ENCODE measurements at regions of chr1 and their contacts with region 1.

Region 1: GRCh38 chr1:3491291-3492246 is 37.1 kb downstream of the ARHGEF16 start:
- DNase-seq: peak; percentile 79
- H3K4me3 ChIP-seq: no peak overlapping the region
- H3K27ac ChIP-seq: no peak overlapping the region
- H3K4me1 ChIP-seq: no peaks in the 10 kb centered on the region
- H3K27me3 ChIP-seq: no peaks in the 10 kb centered on the region
- CTCF ChIP-seq: peak; percentile 98

Region 2: DNA sequence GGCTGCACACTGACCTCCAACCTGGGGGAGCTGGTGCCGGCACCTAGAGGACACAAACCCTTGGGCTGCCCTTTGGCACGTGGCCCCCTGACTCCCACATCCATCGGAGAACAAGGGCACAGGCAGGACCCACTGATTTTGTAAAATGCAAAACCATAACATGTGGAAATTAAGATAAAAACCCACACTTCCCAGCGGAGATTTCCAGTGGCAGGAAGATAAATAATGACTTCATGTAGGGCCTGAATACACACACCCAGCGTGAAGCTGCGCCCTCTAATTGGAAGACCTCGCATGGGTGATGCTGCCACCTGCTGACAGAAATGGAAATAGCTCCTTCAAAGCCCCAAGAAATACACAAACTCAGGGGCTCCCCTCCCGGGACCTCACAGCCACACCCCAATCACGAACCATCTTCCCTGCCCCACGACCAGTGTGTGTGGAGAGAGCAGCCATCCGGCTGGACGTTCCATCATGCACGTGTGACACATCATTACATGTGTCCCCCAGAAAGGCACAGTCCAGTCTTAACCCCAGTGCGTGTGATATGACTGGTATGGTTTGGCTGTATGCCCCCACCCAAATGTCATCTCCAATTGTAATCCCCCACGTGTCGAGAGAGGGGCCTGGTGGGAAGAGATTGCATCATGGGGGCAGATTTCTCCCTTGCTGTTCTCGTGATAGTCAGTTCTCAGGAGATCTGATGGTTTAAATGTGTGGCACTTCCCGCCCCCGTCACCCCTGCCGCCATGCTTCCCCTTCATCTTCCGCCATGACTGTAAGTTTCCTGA is 127.5 kb after region 1 on chr1:
- CTCF ChIA-PET with region 1: interaction called, 28 read pairs
- POLR2A ChIA-PET with region 1: no interaction called
- intact Hi-C with region 1: loop called (anchors 1 kb)
- DNase-seq: peak; percentile 87
- H3K4me3 ChIP-seq: no peak overlapping the region
- H3K27ac ChIP-seq: no peak overlapping the region
- H3K4me1 ChIP-seq: peaks cover 5% of the 10 kb centered on the region
- H3K27me3 ChIP-seq: no peaks in the 10 kb centered on the region
- CTCF ChIP-seq: peak; percentile 91

Region 3: GRCh38 chr1:3639397-3639911 is 147.9 kb after region 1 on chr1:
- CTCF ChIA-PET with region 1: no interaction called
- POLR2A ChIA-PET with region 1: no interaction called
- intact Hi-C with region 1: no loop called
- DNase-seq: no peak
- H3K4me3 ChIP-seq: no peak overlapping the region
- H3K27ac ChIP-seq: no peak overlapping the region
- H3K4me1 ChIP-seq: no peaks in the 10 kb centered on the region
- H3K27me3 ChIP-seq: no peaks in the 10 kb centered on the region
- CTCF ChIP-seq: no peak

Region 4: GRCh38 chr1:3727042-3727824 is 235.7 kb after region 1 on chr1:
- CTCF ChIA-PET with region 1: interaction called, 5 read pairs
- POLR2A ChIA-PET with region 1: no interaction called
- intact Hi-C with region 1: loop called (anchors 2 kb)
- DNase-seq: peak; percentile 30
- H3K4me3 ChIP-seq: no peak overlapping the region
- H3K27ac ChIP-seq: no peak overlapping the region
- H3K4me1 ChIP-seq: no peaks in the 10 kb centered on the region
- H3K27me3 ChIP-seq: no peaks in the 10 kb centered on the region
- CTCF ChIP-seq: peak; percentile 48

Measured in A673 (cell line).